ENCODE measurements at regions of chr11 and their contacts with region 1.

Region 1: GRCh38 chr11:36041988-36042611 is 98.2 kb downstream of the LDLRAD3 start:
- DNase-seq: peak; percentile 29 to 74 (median 65)
- H3K4me3 ChIP-seq: no peak overlapping the region
- H3K27ac ChIP-seq: no peak overlapping the region
- H3K4me1 ChIP-seq: peaks cover 0 to 18% (median 9%) of the 10 kb centered on the region in 4 experiments
- H3K27me3 ChIP-seq: peaks cover 0 to 2% (median 0%) of the 10 kb centered on the region in 5 experiments

Region 2: GRCh38 chr11:36258730-36259360 is 216.7 kb after region 1 on chr11:
- CTCF ChIA-PET with region 1: interaction called, 16 read pairs
- POLR2A ChIA-PET with region 1: no interaction called
- DNase-seq: peak; percentile 48 to 70 (median 68)
- H3K4me3 ChIP-seq: no peak overlapping the region
- H3K27ac ChIP-seq: no peak overlapping the region
- H3K4me1 ChIP-seq: peaks cover 0 to 3% (median 0%) of the 10 kb centered on the region in 4 experiments
- H3K27me3 ChIP-seq: peaks cover 0 to 54% (median 7%) of the 10 kb centered on the region in 5 experiments

Region 3: GRCh38 chr11:36265793-36266628 is 223.9 kb after region 1 on chr11:
- CTCF ChIA-PET with region 1: interaction called, 16 read pairs
- POLR2A ChIA-PET with region 1: no interaction called
- DNase-seq: peak; percentile 37 to 65 (median 45)
- H3K4me3 ChIP-seq: no peak overlapping the region
- H3K27ac ChIP-seq: no peak overlapping the region
- H3K4me1 ChIP-seq: peaks cover 0 to 2% (median 0%) of the 10 kb centered on the region in 4 experiments
- H3K27me3 ChIP-seq: peaks cover 0 to 25% (median 9%) of the 10 kb centered on the region in 5 experiments